Ovary (tissue), 10 donors: ENCODE measurements at regions of chr9 and their contacts with region 1.

Region 1: DNA sequence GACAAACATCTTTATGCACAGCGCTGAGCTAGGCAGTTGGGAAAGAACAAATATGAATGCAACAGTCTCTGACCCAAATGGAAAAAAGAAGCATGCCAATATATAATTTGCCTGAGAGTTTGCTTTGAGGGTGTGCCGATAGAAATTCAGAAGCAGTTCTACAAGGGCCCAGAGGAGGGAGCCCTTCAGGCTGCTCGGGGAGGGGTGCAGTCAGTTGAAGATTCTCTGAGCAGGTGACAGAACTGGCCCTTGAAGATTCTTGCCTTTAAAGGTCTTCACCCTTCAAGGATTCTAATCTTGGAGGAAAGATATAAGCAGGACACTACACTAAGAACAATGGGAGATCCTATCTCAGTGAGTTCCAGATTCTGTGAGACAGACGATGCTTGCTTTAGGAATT is 3.7 kb upstream of the PAPPA start:
- DNase-seq: peak in 2 of 5 donors; percentile 37 to 38
- H3K4me3 ChIP-seq: no peak overlapping the region
- H3K27ac ChIP-seq: no peak overlapping the region
- H3K4me1 ChIP-seq: peaks cover 5% of the 10 kb centered on the region
- H3K27me3 ChIP-seq: no peaks in the 10 kb centered on the region
- CTCF ChIP-seq: peak in 2 of 3 donors; percentile 19 to 48
- EP300 ChIP-seq: no peak
- POLR2A ChIP-seq: no peak

Region 2: DNA sequence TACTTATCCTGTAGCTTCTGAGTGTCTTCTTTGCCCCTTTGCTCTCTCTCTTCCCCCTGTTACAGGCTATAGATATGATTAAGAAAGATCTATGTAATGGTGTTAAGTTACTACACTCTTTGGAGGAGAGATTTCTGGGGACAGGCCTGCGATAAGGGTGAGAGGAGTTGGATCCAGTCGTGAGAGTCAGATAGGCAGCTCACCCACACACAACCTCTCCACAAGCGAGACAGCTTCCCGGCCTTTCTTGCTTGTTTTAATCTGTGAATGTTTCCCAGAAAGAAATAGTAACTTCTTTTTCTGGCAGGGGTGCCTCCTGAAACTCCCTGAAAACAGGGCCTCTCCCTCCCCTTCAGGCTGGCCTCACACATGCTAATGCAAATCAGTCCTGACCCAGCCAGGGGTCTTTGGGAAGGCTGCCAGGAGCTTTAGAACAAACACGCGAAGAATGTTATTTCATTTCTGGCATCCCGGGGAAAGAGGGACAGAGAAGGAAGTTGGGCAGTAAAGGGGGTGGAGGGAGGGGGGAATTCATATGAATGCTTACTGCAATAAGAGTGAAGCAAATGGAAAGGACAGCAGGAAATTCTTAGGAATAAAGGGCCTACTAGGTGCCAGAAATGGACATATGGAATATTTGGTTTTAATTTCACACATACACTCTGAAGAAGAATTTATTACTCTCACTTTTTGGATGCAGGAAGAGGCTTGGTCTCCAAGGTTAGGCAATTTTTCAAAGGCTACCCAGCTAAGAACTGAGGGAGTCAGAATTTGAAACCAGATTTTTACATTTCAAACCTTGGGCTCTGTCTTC is 321.5 kb after region 1 on chr9:
- intact Hi-C with region 1: loop called in 2 of 4 experiments (anchors 10 kb)
- DNase-seq: peak; percentile 71 to 88 (median 86)
- H3K4me3 ChIP-seq: no peak overlapping the region
- H3K27ac ChIP-seq: peak overlapping the region in 1 of 2 donors; percentile 63
- H3K4me1 ChIP-seq: peaks cover 6% of the 10 kb centered on the region
- H3K27me3 ChIP-seq: no peaks in the 10 kb centered on the region
- CTCF ChIP-seq: no peak
- EP300 ChIP-seq: no peak
- POLR2A ChIP-seq: no peak

Region 3: DNA sequence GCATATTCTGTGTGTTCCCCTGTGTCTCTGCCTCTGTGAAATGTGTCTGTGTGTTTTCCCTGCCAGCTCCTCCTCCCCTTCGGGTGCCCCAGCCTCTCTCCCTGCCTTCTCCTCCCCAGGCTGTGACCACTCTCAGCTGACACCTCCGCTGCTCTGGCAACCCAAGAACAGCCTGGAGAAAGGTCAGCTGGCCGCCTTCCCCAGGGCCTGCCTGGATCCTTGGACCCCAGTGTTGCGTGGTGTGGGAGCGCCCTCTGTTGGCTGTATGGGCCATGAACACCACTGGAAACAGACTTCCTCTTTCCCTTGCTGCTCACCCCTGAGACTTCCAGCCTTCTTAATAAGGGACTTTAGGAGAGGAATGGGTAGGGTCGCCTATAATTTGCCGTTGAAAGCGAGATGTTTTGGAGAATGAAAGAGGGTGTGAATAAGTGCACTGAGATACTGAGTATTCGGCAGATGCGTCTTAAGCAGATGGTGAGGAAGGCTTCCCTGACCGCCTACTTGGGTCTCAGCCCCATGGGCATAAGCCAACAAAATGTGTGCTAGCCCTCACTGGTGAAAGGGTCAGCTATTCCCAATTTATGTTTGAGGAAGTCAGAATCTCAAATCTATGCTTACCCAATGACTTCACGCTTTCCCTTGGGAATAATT is 422.4 kb after region 1 on chr9:
- intact Hi-C with region 1: loop called in 3 of 4 experiments (anchors 5 kb)
- DNase-seq: peak; percentile 93 to 97 (median 94)
- H3K4me3 ChIP-seq: no peak overlapping the region
- H3K27ac ChIP-seq: no peak overlapping the region
- H3K4me1 ChIP-seq: no peaks in the 10 kb centered on the region
- H3K27me3 ChIP-seq: no peaks in the 10 kb centered on the region
- CTCF ChIP-seq: peak; percentile 87 to 91 (median 91)
- EP300 ChIP-seq: no peak
- POLR2A ChIP-seq: peak; percentile 24